ENCODE measurements at regions of chr18 and their contacts with region 1.

Region 1: GRCh38 chr18:46167971-46168370 is 63.8 kb downstream of the HAUS1 start:
- DNase-seq: no peak
- H3K4me3 ChIP-seq: no peak overlapping the region
- H3K27ac ChIP-seq: no peak overlapping the region
- H3K4me1 ChIP-seq: peaks cover 0 to 2% (median 0%) of the 10 kb centered on the region in 4 donors
- H3K27me3 ChIP-seq: no peaks in the 10 kb centered on the region
- CTCF ChIP-seq: no peak

Region 2: DNA sequence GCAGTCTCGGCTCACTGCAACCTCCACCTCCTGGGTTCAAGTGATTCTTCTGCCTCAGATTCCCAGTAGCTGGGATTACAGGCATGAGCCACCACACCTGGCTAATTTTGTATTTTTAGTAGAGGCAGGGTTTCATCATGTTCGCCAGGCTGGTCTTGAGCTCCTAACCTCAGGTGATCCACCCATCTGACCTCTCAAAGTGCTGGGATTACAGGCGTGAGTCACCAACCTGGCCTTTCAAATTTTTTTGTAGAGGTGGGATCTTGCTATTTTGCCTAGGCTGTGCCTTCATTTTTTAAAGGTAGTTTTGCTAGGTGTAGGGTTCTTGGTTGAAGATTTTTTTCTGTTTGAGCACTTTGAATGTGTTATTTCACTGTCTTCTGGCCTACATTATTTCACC is 57.6 kb before region 1 on chr18:
- intact Hi-C with region 1: no loop called
- DNase-seq: no peak
- H3K4me3 ChIP-seq: no peak overlapping the region
- H3K27ac ChIP-seq: no peak overlapping the region
- H3K4me1 ChIP-seq: peaks cover 0 to 13% (median 0%) of the 10 kb centered on the region in 4 donors
- H3K27me3 ChIP-seq: no peaks in the 10 kb centered on the region
- CTCF ChIP-seq: no peak

Region 3: GRCh38 chr18:46346213-46346612 is 178.2 kb after region 1 on chr18:
- intact Hi-C with region 1: no loop called
- DNase-seq: peak in 1 of 2 donors; percentile 12
- H3K4me3 ChIP-seq: no peak overlapping the region
- H3K27ac ChIP-seq: no peak overlapping the region
- H3K4me1 ChIP-seq: no peaks in the 10 kb centered on the region
- H3K27me3 ChIP-seq: no peaks in the 10 kb centered on the region
- CTCF ChIP-seq: no peak

Region 4: GRCh38 chr18:46393230-46393629 is 225.3 kb after region 1 on chr18:
- intact Hi-C with region 1: loop called (anchors 10 kb)
- DNase-seq: no peak
- H3K4me3 ChIP-seq: no peak overlapping the region
- H3K27ac ChIP-seq: no peak overlapping the region
- H3K4me1 ChIP-seq: peaks cover 0 to 7% (median 3%) of the 10 kb centered on the region in 4 donors
- H3K27me3 ChIP-seq: no peaks in the 10 kb centered on the region
- CTCF ChIP-seq: no peak

Measured in tibial artery (tissue), 4 donors.